BJ (cell line): ENCODE measurements at regions of chr15 and their contacts with region 1.

Region 1: GRCh38 chr15:29207027-29207757 is 62.4 kb downstream of the NSMCE3 start:
- DNase-seq: no peak
- H3K4me3 ChIP-seq: no peak overlapping the region
- H3K27me3 ChIP-seq: no peaks in the 10 kb centered on the region
- CTCF ChIP-seq: no peak

Region 2: DNA sequence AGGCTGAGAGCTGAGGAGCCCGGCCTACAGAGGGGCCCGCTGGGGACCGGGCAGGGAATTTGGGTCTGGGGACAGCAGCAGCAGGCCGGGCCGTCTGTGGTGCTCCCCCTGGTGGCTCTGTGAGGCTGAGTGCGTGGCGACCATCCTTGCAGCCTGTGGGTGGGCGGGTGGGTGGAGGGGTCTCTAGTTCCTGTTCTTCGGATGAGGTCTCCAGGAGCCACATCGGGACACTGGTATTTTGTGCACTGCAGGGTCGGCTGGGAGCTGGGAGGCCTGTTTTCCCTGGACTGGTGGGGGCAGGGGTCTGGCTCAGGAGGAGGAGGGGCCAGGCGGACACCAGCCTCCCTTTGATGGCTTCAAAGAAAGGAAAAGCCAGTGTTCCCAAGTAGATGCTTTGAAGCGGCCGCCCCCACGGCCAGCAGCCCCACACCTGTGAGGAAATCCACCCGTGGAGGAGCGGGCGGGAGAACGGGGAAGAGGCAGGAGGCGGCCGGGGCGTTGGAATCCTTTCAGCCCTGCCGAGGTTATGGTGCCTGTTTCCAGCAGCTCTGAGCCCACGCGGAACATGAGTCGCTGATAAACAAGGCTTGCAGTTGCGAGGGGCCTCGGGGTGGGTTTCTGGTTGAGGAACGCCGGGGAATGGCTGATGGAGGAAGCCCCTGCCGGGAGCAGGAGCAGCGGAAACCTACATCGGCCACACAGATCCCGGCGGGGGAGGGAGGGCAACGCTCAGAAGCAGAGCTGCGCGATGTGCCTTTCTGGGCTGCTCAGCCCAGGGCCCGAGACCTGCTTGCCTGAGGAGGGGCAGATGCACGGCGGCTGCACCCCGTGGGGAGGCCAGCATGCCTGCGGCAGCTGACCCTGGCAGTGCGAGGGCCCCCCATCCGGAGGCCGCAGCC is 91.8 kb before region 1 on chr15:
- CTCF ChIA-PET with region 1: no interaction called
- POLR2A ChIA-PET with region 1: no interaction called
- DNase-seq: no peak
- H3K4me3 ChIP-seq: peak overlapping the region; percentile 21; the same call in 1 of the 2 replicates
- H3K27me3 ChIP-seq: no peaks in the 10 kb centered on the region
- CTCF ChIP-seq: peak; percentile 48

Region 3: DNA sequence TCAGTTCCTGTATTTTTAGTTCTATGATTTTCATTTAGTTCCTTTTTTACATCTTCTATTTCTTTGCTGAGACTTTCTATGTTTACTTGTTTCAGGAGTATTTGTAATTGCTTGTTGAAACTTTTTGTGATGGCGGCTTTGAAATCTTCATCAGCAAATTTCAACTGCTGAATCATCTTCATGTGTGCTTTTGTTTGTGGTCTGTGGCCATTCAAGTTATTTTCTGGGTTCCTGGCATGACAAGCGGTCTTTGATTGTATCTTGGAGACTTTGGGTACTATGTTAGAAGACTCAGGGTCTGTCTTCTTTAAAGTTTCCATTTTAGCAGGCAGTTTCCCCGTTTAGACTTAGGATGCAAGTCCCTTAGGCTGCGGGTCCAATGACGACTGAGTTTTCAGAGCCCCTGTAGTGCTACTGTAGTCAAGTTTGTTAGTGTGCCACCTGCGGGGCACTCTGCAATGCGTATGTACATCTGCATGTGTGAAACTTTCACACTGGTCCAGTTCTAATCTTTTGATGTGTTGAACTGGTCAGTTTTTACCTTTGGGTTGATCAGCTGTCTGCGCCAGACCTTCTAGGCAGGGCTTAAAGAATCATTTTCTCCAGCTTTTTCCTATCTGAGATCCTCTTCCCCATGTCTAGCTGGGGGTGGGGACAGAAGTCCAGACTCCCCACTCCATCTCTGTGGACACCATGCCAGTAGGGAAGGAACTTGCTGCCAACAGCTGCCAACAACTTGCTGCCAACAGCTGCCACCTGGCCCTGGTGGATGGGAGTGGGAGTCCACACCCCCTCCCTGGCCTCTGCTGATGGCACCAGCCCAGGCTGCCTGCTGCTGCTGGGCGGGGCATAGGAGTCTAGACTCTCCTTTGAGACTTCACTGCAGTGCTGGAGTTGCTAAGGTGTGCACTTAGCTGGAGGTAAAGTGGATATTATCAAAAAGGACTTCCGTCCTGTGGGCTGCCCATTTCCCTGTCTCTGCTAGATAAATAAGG is 424.2 kb after region 1 on chr15:
- CTCF ChIA-PET with region 1: no interaction called
- POLR2A ChIA-PET with region 1: interaction called, 16 read pairs
- DNase-seq: no peak
- H3K4me3 ChIP-seq: no peak overlapping the region
- H3K27me3 ChIP-seq: no peaks in the 10 kb centered on the region
- CTCF ChIP-seq: no peak